ENCODE measurements at regions of chr1 and their contacts with region 1.

Region 1: DNA sequence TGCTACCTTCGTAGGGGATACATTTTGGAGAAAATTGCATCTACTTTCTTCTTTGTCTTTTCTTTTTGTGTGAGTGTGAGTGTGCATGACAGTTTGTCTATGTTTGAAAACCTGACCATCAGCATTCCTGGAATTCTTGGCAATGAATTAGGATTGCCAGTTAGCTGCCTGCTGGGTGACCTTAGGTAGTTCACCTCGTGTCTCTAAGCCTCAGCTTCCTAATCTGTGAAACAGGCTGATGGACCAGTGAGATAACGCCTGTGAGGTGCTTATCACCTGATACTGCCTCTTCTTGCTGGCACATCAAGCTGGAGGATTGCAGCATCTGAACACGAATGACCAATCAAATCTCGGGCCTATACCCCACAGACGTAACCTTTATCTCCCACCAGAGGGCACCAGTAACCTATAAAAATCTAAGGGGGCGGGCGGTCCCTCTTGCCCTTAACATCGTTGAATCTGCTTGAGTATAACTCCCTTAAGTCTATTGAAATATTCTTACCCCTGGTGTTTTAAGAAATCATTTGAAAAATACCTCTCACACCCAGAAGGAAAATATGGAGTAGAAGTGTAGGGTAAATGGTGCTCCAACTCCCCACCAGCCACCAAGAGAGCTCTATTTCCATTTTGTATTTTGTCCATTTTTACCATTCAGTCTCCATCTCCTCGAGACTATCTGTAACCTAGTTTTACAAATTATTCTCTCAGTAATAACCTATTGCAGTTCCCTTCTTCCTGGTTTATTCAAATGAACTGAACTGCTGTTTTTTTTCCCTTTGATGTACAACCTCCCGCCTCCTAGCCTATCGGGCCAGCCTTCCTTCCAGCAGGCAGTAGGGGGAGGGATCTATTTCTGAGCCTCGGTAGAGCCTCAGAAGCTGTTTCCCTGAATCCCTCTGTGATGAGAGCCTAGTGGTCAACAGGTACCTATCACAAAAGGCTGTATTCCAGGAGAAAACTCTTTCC is 49.7 kb downstream of the MDM4 start:
- DNase-seq: peak; percentile 51 to 55
- H3K4me3 ChIP-seq: no peak overlapping the region
- H3K27ac ChIP-seq: no peak overlapping the region
- H3K4me1 ChIP-seq: no peaks in the 10 kb centered on the region
- H3K27me3 ChIP-seq: no peaks in the 10 kb centered on the region
- CTCF ChIP-seq: peak; percentile 64 to 78 (median 74)
- POLR2A ChIP-seq: no peak

Region 2: GRCh38 chr1:204647114-204647804 is 81.4 kb after region 1 on chr1:
- intact Hi-C with region 1: no loop called
- DNase-seq: no peak
- H3K4me3 ChIP-seq: no peak overlapping the region
- H3K27ac ChIP-seq: no peak overlapping the region
- H3K4me1 ChIP-seq: no peaks in the 10 kb centered on the region
- H3K27me3 ChIP-seq: no peaks in the 10 kb centered on the region
- CTCF ChIP-seq: no peak
- POLR2A ChIP-seq: no peak

Region 3: GRCh38 chr1:204763706-204764427 is 198.0 kb after region 1 on chr1:
- intact Hi-C with region 1: loop called (anchors 10 kb)
- DNase-seq: peak; percentile 50 to 53
- H3K4me3 ChIP-seq: no peak overlapping the region
- H3K27ac ChIP-seq: no peak overlapping the region
- H3K4me1 ChIP-seq: peaks cover 4 to 5% of the 10 kb centered on the region in 2 donors
- H3K27me3 ChIP-seq: no peaks in the 10 kb centered on the region
- CTCF ChIP-seq: peak; percentile 47 to 71 (median 67)
- POLR2A ChIP-seq: no peak